ENCODE measurements at regions of chr3 and their contacts with region 1.

Region 1: DNA sequence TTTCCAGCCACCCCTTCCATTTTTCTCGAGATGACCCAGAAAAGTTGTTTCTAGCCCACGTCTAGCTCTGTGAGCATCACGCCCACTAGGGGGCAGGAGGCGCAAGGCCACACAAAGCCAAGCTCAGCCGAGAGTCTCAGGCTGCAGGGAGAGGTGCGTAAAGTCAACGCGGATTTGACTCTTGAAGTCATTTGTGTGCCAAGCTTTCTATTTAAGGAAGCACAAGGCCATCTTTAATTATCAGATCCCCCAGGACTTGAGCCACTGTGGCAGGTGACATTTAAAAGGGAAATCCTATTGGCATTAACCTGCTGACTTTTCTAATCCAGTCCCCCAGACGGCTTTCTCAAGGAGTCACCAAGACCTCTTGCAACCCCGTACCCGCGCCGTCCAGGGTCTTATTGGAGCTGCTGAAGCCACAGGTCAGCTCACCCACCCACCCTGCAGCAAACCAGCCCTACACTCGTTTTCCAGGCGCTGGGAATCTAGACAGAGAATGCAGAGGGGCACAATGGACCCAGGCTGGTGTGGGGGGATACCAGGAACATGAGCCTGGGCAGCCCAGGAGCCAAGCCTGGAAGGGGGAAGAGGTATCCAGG is 62.1 kb downstream of the CAPN7 start:
- DNase-seq: peak; percentile 93
- H3K4me3 Mint-ChIP-seq: no peak overlapping the region
- H3K27ac Mint-ChIP-seq: no peak overlapping the region
- H3K4me1 Mint-ChIP-seq: peaks cover 61% of the 10 kb centered on the region
- H3K27me3 Mint-ChIP-seq: no peaks in the 10 kb centered on the region

Region 2: DNA sequence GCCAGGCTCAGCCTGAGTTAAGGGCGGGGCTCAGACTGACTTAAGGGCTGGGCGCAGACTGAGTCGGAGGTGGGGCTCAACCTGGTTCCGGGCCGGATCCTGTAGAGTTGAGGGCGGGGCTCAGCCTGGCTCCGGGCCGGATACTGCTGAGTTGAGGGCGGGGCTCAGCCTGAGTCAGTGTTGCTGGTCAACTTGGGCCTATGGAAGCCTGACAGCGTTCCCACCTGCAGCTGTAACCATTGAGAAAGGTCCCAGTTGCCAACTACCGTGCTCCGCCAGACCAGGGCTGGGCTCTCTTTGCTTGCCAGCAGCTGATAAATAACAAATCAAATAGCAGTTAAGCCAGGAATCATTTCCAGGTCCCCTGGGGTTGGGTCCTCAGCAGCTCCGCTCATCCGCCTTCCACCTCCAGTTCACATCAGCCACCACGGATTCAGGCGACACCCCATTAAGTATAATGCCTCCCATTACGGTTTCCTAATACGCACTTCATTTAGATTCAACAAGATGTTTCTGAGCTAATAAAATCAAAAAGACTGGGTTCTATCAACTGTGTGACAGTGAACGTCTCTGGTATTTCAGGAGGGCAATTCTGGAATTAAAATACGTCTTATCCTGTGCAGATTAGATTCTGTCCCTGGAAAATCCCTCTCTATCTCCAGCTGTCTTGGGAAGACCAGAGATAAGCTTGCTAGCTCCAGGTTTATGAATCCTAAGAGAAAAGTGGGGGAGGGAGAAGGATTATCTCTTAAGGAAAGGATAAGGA is 735.3 kb before region 1 on chr3:
- CTCF ChIA-PET with region 1: no interaction called
- intact Hi-C with region 1: no loop called
- DNase-seq: peak; percentile 11
- H3K4me3 Mint-ChIP-seq: no peak overlapping the region
- H3K27ac Mint-ChIP-seq: no peak overlapping the region
- H3K4me1 Mint-ChIP-seq: no peaks in the 10 kb centered on the region
- H3K27me3 Mint-ChIP-seq: peaks cover 2% of the 10 kb centered on the region

Region 3: DNA sequence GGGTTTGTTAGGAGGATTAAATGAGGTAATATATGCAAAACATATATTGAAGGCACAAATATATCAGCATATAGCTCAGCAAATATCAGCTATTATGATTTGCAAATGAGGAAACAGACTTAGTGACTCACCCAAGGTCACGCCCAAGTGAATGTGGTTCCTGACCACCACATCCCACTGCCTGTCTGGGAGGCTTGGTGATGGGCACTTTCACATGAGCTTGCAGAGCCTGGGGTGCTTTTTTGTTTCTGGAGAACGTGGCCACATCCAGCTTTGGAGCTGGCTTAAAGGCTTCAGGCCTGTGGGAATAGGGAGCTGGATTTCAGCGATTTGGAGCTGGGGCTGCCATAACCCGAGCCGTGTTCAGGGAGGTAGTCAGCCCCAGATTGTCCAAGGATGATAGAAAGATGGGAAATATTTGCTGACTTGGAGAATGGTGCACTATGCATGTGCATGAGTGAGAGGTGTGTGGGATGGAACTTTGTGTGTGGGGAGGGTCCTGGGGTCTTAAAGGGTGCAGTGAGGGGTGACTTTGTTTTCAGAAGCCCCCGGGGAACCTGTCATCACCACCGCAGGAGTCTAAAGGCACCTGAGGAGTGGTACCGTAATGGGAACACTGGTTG is 461.4 kb before region 1 on chr3:
- CTCF ChIA-PET with region 1: no interaction called
- intact Hi-C with region 1: no loop called
- DNase-seq: no peak
- H3K4me3 Mint-ChIP-seq: no peak overlapping the region
- H3K27ac Mint-ChIP-seq: no peak overlapping the region
- H3K4me1 Mint-ChIP-seq: peaks cover 14% of the 10 kb centered on the region
- H3K27me3 Mint-ChIP-seq: peaks cover 22% of the 10 kb centered on the region

Region 4: GRCh38 chr3:15108082-15108545 is 160.0 kb before region 1 on chr3:
- CTCF ChIA-PET with region 1: interaction called, 12 read pairs
- intact Hi-C with region 1: loop called (anchors 5 kb)
- DNase-seq: peak; percentile 76
- H3K4me3 Mint-ChIP-seq: no peak overlapping the region
- H3K27ac Mint-ChIP-seq: no peak overlapping the region
- H3K4me1 Mint-ChIP-seq: no peaks in the 10 kb centered on the region
- H3K27me3 Mint-ChIP-seq: no peaks in the 10 kb centered on the region

Region 5: DNA sequence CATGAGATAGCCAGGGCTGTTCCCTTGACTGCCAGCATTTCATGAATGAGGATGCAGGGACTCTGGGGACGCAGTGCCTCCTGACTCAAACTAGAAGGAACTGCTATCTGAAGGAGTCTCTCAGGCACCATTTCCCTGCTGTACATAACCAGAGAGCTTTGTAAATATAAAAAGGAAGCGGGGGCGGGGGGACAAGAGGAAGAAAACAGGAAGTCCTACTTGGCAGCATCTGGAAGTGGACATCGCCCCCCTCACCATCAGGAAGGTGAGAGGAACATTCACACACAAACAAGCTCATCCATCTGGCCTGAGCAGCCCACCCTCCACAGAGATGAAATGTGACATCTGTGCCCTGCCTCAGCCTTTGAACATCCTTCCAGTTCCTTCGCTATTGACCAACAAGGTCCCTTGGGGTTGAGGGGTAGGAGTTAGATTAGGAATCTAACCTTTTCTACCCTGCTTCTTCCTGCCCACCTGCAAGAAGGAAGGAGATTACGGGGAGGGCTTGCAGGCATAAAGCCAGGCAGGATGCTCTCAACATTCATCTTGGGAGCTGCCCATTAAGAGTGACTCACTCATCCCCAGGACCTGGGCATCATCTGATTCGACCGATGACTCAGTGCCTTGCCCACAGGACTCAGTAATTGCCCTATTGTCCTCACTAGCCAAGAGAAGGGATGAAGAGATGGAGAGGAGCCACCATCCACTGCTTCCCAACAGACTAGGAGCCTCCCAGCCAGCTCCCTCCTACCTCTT is 32.4 kb after region 1 on chr3:
- CTCF ChIA-PET with region 1: interaction called, 14 read pairs
- intact Hi-C with region 1: no loop called
- DNase-seq: no peak
- H3K4me3 Mint-ChIP-seq: no peak overlapping the region
- H3K27ac Mint-ChIP-seq: no peak overlapping the region
- H3K4me1 Mint-ChIP-seq: peaks cover 67% of the 10 kb centered on the region
- H3K27me3 Mint-ChIP-seq: no peaks in the 10 kb centered on the region

Region 6: DNA sequence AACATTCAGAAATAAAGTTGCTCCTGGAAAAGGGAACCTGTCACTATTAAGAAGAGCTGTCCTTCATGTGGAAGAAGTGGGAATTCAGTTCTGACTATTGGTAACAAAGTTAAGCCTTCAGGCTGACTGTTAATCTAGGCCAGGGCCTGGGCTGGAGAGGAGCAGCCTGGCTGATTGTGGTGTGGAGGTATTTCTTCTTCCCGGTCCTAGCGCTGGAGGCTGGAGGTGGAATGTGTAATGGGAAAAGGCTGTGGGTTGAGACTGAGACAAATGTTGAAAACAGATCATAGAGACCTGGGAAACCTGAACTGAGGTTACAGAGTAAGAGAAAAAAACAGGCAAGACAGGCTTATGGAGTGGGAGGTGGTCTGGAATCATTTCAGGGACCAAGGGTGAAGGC is 88.1 kb after region 1 on chr3:
- CTCF ChIA-PET with region 1: interaction called, 13 read pairs
- intact Hi-C with region 1: loop called (anchors 1 kb)
- DNase-seq: no peak
- H3K4me3 Mint-ChIP-seq: peak overlapping the region; percentile 7
- H3K27ac Mint-ChIP-seq: peak overlapping the region; percentile 32
- H3K4me1 Mint-ChIP-seq: peaks cover 45% of the 10 kb centered on the region
- H3K27me3 Mint-ChIP-seq: no peaks in the 10 kb centered on the region

Region 7: DNA sequence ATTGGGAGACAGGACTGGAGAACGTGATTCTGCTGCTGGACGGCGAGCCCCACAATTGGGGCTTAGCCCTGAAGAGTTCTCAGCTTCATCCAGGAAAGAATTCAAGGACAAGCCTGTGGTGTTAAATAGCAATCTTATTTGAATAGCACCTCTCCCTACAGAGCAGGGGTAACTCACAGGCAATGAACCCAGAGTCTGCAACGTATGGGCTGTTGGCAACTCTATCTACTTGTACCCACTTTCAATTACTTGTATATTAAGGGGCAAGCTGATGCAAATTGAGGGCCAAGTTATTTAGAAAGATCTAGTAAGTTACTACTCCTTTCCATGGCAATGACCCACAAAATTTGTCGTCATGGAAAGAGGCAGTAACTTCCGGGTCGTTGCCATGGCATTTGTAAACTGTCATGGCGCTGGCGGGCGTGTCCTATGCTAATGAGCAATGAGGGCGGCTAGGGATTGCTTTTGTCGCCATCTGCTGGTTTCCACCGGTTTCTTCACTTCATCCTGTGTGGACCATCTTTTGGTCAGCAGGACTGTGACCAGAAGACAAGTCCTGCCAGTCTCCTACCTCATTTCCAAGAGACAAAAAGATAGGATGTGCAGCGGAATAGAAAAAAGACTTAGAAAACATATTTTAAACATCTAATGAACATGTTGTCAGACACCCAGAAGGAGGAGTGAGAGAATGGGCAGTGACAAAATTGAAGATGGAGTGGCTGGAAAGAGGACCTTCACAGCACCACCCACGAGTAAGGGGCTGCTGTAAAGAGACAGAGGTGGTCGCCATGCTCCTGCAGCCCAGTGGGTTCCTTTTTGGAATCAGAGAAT is 110.0 kb after region 1 on chr3:
- CTCF ChIA-PET with region 1: interaction called, 169 read pairs
- intact Hi-C with region 1: loop called (anchors 1 kb)
- DNase-seq: peak; percentile 97
- H3K4me3 Mint-ChIP-seq: no peak overlapping the region
- H3K27ac Mint-ChIP-seq: peak overlapping the region; percentile 24
- H3K4me1 Mint-ChIP-seq: peaks cover 5% of the 10 kb centered on the region
- H3K27me3 Mint-ChIP-seq: no peaks in the 10 kb centered on the region

Region 8: DNA sequence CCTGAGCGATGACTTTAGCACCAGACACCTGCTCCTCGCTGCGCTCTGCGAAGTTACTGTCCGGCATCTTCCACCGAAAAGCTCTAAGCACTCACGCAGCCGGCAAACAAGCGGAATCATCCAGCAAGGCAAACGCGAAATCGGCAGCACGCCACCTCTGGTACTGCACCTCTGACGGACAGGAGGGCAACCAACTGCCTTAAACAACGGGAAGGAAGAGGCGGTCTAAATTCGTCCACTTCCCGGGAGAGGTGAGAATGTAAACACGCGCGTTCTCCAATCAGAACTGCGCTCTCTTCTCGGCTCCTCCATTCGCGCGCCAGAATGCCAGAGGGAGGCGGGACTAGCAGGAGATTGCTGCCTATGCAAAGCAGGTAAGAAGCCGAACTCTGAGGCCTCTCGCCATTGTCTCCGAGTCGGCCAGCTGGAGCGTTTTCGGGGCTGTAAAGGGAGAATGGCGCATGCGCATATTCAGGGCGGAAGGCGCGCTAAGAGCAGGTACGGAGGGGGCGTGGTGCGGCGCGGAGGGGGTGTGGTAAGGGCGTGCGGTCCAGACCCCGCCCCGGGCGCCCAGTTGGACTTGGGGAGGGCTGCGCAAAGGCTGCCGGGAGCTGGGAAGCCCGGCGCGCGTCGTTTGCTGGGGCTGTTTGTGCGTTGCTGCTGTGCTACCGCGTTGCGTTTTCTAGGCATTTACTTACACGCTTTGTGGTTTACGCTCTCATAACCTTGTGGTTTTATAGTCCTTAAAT is 333.4 kb after region 1 on chr3 and contains the starts of genes BTD and HACL1:
- CTCF ChIA-PET with region 1: no interaction called
- intact Hi-C with region 1: loop called (anchors 2 kb)
- DNase-seq: peak; percentile 99
- H3K4me3 Mint-ChIP-seq: peak within 1 kb of the TSS; percentile 99
- H3K27ac Mint-ChIP-seq: peak within 1 kb of the TSS; percentile 96
- H3K4me1 Mint-ChIP-seq: peaks cover 46% of the 10 kb centered on the region
- H3K27me3 Mint-ChIP-seq: no peaks in the 10 kb centered on the region
- total RNA-seq, gene BTD: 8.7 to 9.7 TPM
- total RNA-seq, gene HACL1: 25.3 to 26.5 TPM

Region 9: GRCh38 chr3:15831930-15832329 is 563.8 kb after region 1 on chr3:
- CTCF ChIA-PET with region 1: no interaction called
- intact Hi-C with region 1: no loop called
- DNase-seq: no peak
- H3K4me3 Mint-ChIP-seq: no peak overlapping the region
- H3K27ac Mint-ChIP-seq: no peak overlapping the region
- H3K4me1 Mint-ChIP-seq: peaks cover 10% of the 10 kb centered on the region
- H3K27me3 Mint-ChIP-seq: no peaks in the 10 kb centered on the region

Measured in activated naive CD4-positive, alpha-beta T cell treated with anti-CD3 and anti-CD28 coated beads for 36 hours (primary cell).